AG04449 (cell line): ENCODE measurements at regions of chr17 and their contacts with region 1.

Region 1: GRCh38 chr17:58631523-58632323 is 60.1 kb downstream of the TEX14 start:
- DNase-seq: peak; percentile 98
- H3K4me3 ChIP-seq: peak overlapping the region; percentile 52
- CTCF ChIP-seq: peak; percentile 29

Region 2: GRCh38 chr17:58643140-58643539 is 11.4 kb after region 1 on chr17:
- CTCF ChIA-PET with region 1: interaction called, 4 read pairs
- POLR2A ChIA-PET with region 1: interaction called, 25 read pairs
- DNase-seq: peak; percentile 38
- H3K4me3 ChIP-seq: no peak overlapping the region
- CTCF ChIP-seq: no peak

Region 3: GRCh38 chr17:58658804-58659713 is 27.3 kb after region 1 on chr17:
- CTCF ChIA-PET with region 1: interaction called, 3 read pairs
- POLR2A ChIA-PET with region 1: interaction called, 95 read pairs
- DNase-seq: peak; percentile 95
- H3K4me3 ChIP-seq: peak overlapping the region; percentile 50
- CTCF ChIP-seq: no peak

Region 4: DNA sequence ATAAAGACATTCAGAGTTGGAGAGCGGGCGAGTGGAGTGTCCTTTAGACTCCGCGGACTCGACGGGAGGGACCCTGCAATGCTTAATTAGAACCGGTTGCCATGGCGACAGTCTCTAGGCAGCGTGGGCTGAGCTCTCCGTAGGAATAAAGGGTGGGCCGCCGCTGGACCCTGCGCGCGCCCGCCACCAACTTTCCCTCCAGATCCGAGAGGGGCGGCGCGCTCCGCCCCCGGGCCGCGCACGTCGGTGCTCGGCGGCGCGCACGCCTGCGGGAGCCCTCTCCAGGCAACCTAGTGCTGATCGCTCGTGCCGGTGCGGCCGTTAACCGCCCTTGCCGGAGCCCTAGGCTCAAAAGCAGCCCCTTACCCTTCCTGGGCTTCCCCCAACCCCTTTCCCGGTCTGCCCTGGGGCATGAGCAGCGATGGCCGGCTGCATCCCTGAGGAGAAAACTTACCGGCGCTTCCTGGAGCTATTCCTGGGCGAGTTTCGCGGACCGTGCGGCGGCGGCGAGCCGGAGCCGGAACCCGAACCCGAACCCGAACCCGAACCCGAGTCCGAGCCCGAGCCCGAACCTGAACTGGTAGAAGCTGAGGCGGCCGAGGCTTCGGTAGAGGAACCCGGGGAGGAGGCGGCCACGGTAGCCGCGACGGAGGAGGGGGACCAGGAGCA is 124.0 kb after region 1 on chr17 and contains the start of gene PPM1E:
- CTCF ChIA-PET with region 1: no interaction called
- POLR2A ChIA-PET with region 1: no interaction called
- DNase-seq: no peak
- H3K4me3 ChIP-seq: peak within 1 kb of the TSS; percentile 60
- CTCF ChIP-seq: no peak